ENCODE measurements at regions of chr1 and their contacts with region 1.

Region 1: DNA sequence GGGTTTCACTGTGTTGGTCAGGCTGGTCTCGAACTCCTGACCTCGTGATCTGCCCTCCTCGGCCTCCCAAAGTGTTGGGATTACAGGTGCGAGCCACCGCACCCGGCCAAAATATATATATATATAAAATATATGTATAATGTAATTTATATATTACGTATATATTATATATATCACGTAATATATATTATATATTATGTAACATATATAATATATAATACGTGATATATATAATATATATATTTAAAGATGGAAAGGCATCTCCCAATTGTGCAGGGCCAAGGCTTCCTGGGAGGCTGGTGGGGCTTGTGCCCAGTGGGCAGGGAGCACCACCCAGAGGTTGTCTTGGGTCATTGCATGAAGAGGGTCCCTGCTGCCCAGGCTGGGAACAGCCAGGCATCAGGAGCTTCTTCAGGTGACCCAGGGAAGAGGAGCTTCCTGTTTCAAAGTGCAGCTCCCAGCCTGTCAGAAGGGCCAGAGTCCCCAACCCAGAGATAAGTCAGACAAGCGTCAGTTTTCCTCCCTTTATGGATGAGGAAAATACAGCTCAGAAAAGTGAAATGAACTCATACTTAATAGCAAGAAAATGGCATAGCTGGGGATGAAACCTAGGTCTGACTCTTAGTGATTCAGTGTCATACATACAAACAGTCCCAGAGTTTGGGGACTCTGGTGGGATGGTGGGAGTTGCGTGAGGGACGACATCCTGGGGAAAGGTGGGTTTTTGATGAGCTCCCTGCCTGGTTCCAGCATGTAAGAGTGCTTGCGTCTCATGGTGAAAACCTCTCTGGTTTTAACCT is 12.0 kb downstream of the UBE2Q1 start:
- DNase-seq: peak; percentile 82
- ATAC-seq: peak; percentile 97
- H3K4me3 Mint-ChIP-seq: no peak overlapping the region
- H3K27ac Mint-ChIP-seq: 0 out of 2 replicates have a peak overlapping the region, but pooled peaks have one; percentile 36
- H3K4me1 Mint-ChIP-seq: no peaks in the 10 kb centered on the region; the same call in 1 of the 2 replicates
- H3K27me3 Mint-ChIP-seq: no peaks in the 10 kb centered on the region
- CTCF ChIP-seq: peak; percentile 84

Region 2: GRCh38 chr1:154335025-154335714 is 211.3 kb before region 1 on chr1:
- CTCF ChIA-PET with region 1: interaction called, 26 read pairs
- POLR2A ChIA-PET with region 1: no interaction called
- DNase-seq: peak; percentile 86
- ATAC-seq: peak; percentile 95
- H3K4me3 Mint-ChIP-seq: no peak overlapping the region
- H3K27ac Mint-ChIP-seq: 0 out of 2 replicates have a peak overlapping the region, but pooled peaks have one; percentile 85
- H3K4me1 Mint-ChIP-seq: no peaks in the 10 kb centered on the region
- H3K27me3 Mint-ChIP-seq: no peaks in the 10 kb centered on the region
- CTCF ChIP-seq: peak; percentile 88

Region 3: GRCh38 chr1:154419620-154420571 is 126.6 kb before region 1 on chr1:
- CTCF ChIA-PET with region 1: interaction called, 10 read pairs
- POLR2A ChIA-PET with region 1: no interaction called
- DNase-seq: no peak
- ATAC-seq: no peak
- H3K4me3 Mint-ChIP-seq: no peak overlapping the region
- H3K27ac Mint-ChIP-seq: no peak overlapping the region
- H3K4me1 Mint-ChIP-seq: peaks cover 24% of the 10 kb centered on the region
- H3K27me3 Mint-ChIP-seq: no peaks in the 10 kb centered on the region
- CTCF ChIP-seq: no peak

Region 4: GRCh38 chr1:154479764-154480421 is 66.6 kb before region 1 on chr1:
- CTCF ChIA-PET with region 1: interaction called, 189 read pairs
- POLR2A ChIA-PET with region 1: interaction called, 3 read pairs
- DNase-seq: peak; percentile 54
- ATAC-seq: peak; percentile 84
- H3K4me3 Mint-ChIP-seq: no peak overlapping the region
- H3K27ac Mint-ChIP-seq: no peak overlapping the region
- H3K4me1 Mint-ChIP-seq: peaks cover 21% of the 10 kb centered on the region
- H3K27me3 Mint-ChIP-seq: no peaks in the 10 kb centered on the region
- CTCF ChIP-seq: peak; percentile 78

Region 5: DNA sequence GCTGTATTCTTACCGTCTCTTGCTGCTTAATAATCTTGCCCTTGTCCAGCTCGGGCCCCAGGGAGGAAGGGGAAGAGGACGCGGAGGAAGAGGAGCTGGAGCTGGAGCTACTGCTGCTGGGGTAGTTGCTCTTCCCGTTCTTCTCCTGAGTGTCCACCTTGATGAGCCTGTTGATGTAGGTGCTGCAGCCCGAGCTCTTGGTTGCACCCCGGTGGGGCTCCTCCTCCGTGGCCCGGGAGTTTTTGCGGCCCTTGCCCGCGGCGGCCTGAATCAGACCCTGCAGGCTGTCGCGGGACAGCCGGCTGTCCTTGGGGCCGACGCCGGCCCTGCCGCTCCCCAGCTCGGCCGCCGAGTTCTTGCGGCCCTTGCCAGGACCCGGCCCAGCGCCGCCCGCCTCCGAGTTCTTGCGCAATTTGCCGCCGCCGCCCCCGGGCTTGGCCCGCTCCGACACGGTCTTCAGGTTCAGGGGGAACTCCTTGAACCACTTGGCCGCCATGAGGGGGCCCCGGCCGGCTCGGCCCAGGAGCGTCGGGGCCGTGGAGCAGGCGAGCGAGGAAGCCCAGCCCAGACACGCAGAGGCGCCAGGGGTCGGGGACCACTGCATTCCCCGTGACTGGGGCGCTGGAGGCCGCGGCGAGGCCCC is 44.9 kb before region 1 on chr1:
- CTCF ChIA-PET with region 1: interaction called, 10 read pairs
- POLR2A ChIA-PET with region 1: no interaction called
- DNase-seq: peak; percentile 59
- ATAC-seq: peak; percentile 54
- H3K4me3 Mint-ChIP-seq: peak overlapping the region; percentile 70
- H3K27ac Mint-ChIP-seq: no peak overlapping the region
- H3K4me1 Mint-ChIP-seq: peaks cover 11% of the 10 kb centered on the region
- H3K27me3 Mint-ChIP-seq: peaks cover 77% of the 10 kb centered on the region
- CTCF ChIP-seq: no peak

Region 6: GRCh38 chr1:154533952-154534844 is 12.3 kb before region 1 on chr1:
- CTCF ChIA-PET with region 1: interaction called, 71 read pairs
- POLR2A ChIA-PET with region 1: no interaction called
- DNase-seq: peak; percentile 72
- ATAC-seq: peak; percentile 92
- H3K4me3 Mint-ChIP-seq: no peak overlapping the region
- H3K27ac Mint-ChIP-seq: no peak overlapping the region
- H3K4me1 Mint-ChIP-seq: no peaks in the 10 kb centered on the region
- H3K27me3 Mint-ChIP-seq: no peaks in the 10 kb centered on the region; the same call in 1 of the 2 replicates
- CTCF ChIP-seq: no peak

Region 7: GRCh38 chr1:154567386-154568156 is 21.1 kb after region 1 on chr1 and contains the start of gene CHRNB2:
- CTCF ChIA-PET with region 1: interaction called, 16 read pairs
- POLR2A ChIA-PET with region 1: interaction called, 5 read pairs
- DNase-seq: peak; percentile 92
- ATAC-seq: peak; percentile 93
- H3K4me3 Mint-ChIP-seq: peak within 1 kb of the TSS; percentile 97
- H3K27ac Mint-ChIP-seq: peak within 1 kb of the TSS; percentile 99
- H3K4me1 Mint-ChIP-seq: peaks cover 24% of the 10 kb centered on the region
- H3K27me3 Mint-ChIP-seq: peaks cover 22% of the 10 kb centered on the region
- CTCF ChIP-seq: no peak
- total RNA-seq, gene CHRNB2: 1.6 to 1.7 TPM (median 1.7 TPM) in 3 replicates

Region 8: DNA sequence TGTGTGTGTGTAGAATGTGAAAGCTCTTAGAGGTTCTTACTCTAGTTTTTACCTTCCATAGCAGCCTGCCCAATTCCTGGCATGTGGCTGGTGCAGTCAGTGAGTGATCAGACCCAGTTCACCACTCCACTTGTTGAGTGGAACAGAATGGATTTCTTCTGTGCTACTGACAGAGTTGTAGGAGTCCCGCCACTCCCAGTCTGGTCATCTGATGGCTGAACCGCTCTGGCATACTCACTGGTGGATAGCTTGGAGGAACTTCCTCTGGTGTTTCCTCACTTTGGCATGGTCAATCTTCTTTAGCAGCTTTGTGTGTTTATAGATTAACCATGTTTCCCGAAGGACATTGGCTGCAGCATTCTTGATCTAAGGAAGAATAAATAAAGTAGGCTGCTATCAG is 168.2 kb after region 1 on chr1:
- CTCF ChIA-PET with region 1: no interaction called
- POLR2A ChIA-PET with region 1: no interaction called
- DNase-seq: no peak
- ATAC-seq: no peak; the same call in none of the 2 replicates
- H3K4me3 Mint-ChIP-seq: no peak overlapping the region
- H3K27ac Mint-ChIP-seq: no peak overlapping the region
- H3K4me1 Mint-ChIP-seq: 0 out of 2 replicates have a peak, but pooled peaks cover 3% of the 10 kb centered on the region
- H3K27me3 Mint-ChIP-seq: no peaks in the 10 kb centered on the region
- CTCF ChIP-seq: no peak

Measured in WTC11 (cell line).